ENCODE measurements at regions of chr1 and their contacts with region 1.

Region 1: GRCh38 chr1:85307987-85308832 is 31.8 kb upstream of the BCL10 start:
- DNase-seq: peak; percentile 68 to 78
- ATAC-seq: peak; percentile 93 to 99
- H3K4me3 ChIP-seq: peak overlapping the region in 2 of 4 donors; percentile 10 to 48
- H3K27ac ChIP-seq: no peak overlapping the region
- H3K4me1 ChIP-seq: peaks cover 7 to 16% of the 10 kb centered on the region in 2 donors
- H3K27me3 ChIP-seq: no peaks in the 10 kb centered on the region
- CTCF ChIP-seq: peak; percentile 92 to 99 (median 95)
- POLR2A ChIP-seq: no peak

Region 2: DNA sequence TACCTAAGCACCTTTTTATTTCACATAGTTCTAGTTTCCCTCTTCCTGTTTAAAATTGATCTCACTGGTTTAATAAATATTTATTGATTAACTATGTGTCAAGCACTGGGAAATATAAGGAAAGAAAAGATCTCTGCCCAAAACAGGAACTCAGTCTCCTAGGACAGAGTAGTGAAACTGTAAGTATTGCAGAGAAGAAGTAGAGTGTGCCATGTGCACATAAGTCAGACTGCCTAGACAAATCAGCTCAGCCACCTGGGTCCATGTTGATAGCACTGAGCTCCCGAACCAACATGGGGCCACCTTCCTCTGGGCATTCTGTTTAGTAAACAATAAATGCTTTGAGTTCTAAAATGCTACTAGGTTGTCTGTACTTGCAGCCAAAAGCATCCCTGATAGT is 608.1 kb before region 1 on chr1:
- in situ Hi-C with region 1: no loop called
- intact Hi-C with region 1: no loop called
- DNase-seq: no peak
- ATAC-seq: no peak
- H3K4me3 ChIP-seq: no peak overlapping the region
- H3K27ac ChIP-seq: no peak overlapping the region
- H3K4me1 ChIP-seq: peaks cover 0 to 3% of the 10 kb centered on the region in 2 donors
- H3K27me3 ChIP-seq: no peaks in the 10 kb centered on the region
- CTCF ChIP-seq: no peak
- POLR2A ChIP-seq: no peak

Region 3: GRCh38 chr1:84944767-84945486 is 363.3 kb before region 1 on chr1:
- in situ Hi-C with region 1: no loop called
- intact Hi-C with region 1: no loop called
- DNase-seq: peak; percentile 44 to 52
- ATAC-seq: peak; percentile 98 to 99
- H3K4me3 ChIP-seq: peak overlapping the region; percentile 38 to 58 (median 52)
- H3K27ac ChIP-seq: peak overlapping the region in 3 of 4 donors; percentile 28 to 47 (median 35)
- H3K4me1 ChIP-seq: peaks cover 0 to 6% of the 10 kb centered on the region in 2 donors
- H3K27me3 ChIP-seq: no peaks in the 10 kb centered on the region
- CTCF ChIP-seq: peak; percentile 68 to 90 (median 85)
- POLR2A ChIP-seq: no peak

Region 4: GRCh38 chr1:85214657-85215056 is 93.6 kb before region 1 on chr1:
- in situ Hi-C with region 1: no loop called
- intact Hi-C with region 1: no loop called
- DNase-seq: no peak
- ATAC-seq: no peak
- H3K4me3 ChIP-seq: no peak overlapping the region
- H3K27ac ChIP-seq: no peak overlapping the region
- H3K4me1 ChIP-seq: no peaks in the 10 kb centered on the region
- H3K27me3 ChIP-seq: no peaks in the 10 kb centered on the region
- CTCF ChIP-seq: no peak
- POLR2A ChIP-seq: no peak

Region 5: GRCh38 chr1:85398391-85399064 is 90.3 kb after region 1 on chr1:
- in situ Hi-C with region 1: loop called in 2 of 4 experiments (anchors 5 kb)
- intact Hi-C with region 1: loop called (anchors 2 kb)
- DNase-seq: no peak
- ATAC-seq: peak; percentile 75 to 76
- H3K4me3 ChIP-seq: no peak overlapping the region
- H3K27ac ChIP-seq: peak overlapping the region in 1 of 4 donors; percentile 11
- H3K4me1 ChIP-seq: peaks cover 3 to 10% of the 10 kb centered on the region in 2 donors
- H3K27me3 ChIP-seq: no peaks in the 10 kb centered on the region
- CTCF ChIP-seq: peak; percentile 19 to 60 (median 42)
- POLR2A ChIP-seq: no peak

Region 6: DNA sequence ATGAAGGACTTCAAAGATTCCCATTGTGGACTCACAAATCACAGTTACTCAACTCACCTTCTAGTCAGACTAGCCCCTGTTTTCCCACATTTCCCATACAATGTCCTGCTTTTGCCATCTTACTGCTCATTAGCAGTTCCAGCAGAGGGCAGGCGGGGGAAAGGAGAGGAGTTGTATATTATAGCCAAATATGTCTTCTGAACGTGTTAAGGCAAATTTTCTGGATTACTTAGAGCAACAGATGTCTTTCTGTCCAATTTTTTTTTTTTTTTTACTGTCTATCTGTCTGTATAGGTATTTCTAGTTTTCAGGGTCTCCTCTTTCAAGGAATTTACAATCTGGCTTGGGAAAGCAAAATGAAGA is 186.7 kb after region 1 on chr1:
- in situ Hi-C with region 1: loop called in 2 of 4 experiments (anchors 5 to 10 kb)
- intact Hi-C with region 1: no loop called
- DNase-seq: no peak
- ATAC-seq: peak in 1 of 2 donors; percentile 50
- H3K4me3 ChIP-seq: no peak overlapping the region
- H3K27ac ChIP-seq: no peak overlapping the region
- H3K4me1 ChIP-seq: peaks cover 12 to 14% of the 10 kb centered on the region in 2 donors
- H3K27me3 ChIP-seq: no peaks in the 10 kb centered on the region
- CTCF ChIP-seq: peak in 3 of 5 experiments; percentile 22 to 53 (median 34)
- POLR2A ChIP-seq: no peak

Region 7: DNA sequence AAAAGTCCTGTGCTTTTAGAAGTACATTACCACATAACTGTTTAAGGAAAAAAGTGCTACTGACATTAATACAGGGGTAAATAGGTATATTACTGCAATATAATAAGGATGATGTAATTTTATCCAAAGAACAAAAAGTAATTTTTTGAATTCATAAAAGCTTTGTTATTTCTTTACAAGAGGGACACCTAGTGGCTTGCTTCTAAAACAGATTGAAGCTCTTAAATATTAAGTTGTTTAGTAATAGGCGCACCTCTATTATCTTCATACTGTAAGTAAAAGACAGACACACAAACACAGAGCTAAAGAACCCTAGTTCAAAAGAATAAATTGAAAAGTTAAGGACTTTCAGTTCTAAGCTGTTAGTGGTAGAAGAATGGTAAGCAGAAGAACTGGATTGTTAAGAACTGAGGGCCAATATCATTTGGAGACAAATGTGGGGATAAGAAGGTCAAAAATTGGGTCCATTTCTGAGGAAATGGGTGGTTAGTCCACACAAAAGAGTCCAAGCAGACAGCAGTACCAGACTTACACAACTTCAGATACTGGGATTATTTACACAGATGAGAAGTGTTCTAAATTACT is 384.6 kb after region 1 on chr1:
- in situ Hi-C with region 1: loop called in 2 of 4 experiments (anchors 10 kb)
- intact Hi-C with region 1: loop called (anchors 2 kb)
- DNase-seq: no peak
- ATAC-seq: no peak
- H3K4me3 ChIP-seq: no peak overlapping the region
- H3K27ac ChIP-seq: no peak overlapping the region
- H3K4me1 ChIP-seq: peaks cover 5 to 6% of the 10 kb centered on the region in 2 donors
- H3K27me3 ChIP-seq: no peaks in the 10 kb centered on the region
- CTCF ChIP-seq: peak in 4 of 5 experiments; percentile 18 to 49 (median 30)
- POLR2A ChIP-seq: no peak

Region 8: GRCh38 chr1:85894651-85895050 is 586.4 kb after region 1 on chr1:
- in situ Hi-C with region 1: loop called in 1 of 4 experiments (anchors 25 kb)
- intact Hi-C with region 1: no loop called
- DNase-seq: no peak
- ATAC-seq: no peak
- H3K4me3 ChIP-seq: no peak overlapping the region
- H3K27ac ChIP-seq: no peak overlapping the region
- H3K4me1 ChIP-seq: no peaks in the 10 kb centered on the region
- H3K27me3 ChIP-seq: no peaks in the 10 kb centered on the region
- CTCF ChIP-seq: peak in 1 of 5 experiments; percentile 18
- POLR2A ChIP-seq: no peak

Region 9: GRCh38 chr1:86993269-86993985 is 1685.2 kb after region 1 on chr1:
- in situ Hi-C with region 1: no loop called
- intact Hi-C with region 1: no loop called
- DNase-seq: no peak
- ATAC-seq: no peak
- H3K4me3 ChIP-seq: no peak overlapping the region
- H3K27ac ChIP-seq: no peak overlapping the region
- H3K4me1 ChIP-seq: peaks cover 5 to 14% of the 10 kb centered on the region in 2 donors
- H3K27me3 ChIP-seq: no peaks in the 10 kb centered on the region
- CTCF ChIP-seq: no peak
- POLR2A ChIP-seq: no peak

Measured in gastrocnemius medialis (tissue), 4 donors.